MCF 10A (cell line): ENCODE measurements at regions of chr7 and their contacts with region 1.

Region 1: DNA sequence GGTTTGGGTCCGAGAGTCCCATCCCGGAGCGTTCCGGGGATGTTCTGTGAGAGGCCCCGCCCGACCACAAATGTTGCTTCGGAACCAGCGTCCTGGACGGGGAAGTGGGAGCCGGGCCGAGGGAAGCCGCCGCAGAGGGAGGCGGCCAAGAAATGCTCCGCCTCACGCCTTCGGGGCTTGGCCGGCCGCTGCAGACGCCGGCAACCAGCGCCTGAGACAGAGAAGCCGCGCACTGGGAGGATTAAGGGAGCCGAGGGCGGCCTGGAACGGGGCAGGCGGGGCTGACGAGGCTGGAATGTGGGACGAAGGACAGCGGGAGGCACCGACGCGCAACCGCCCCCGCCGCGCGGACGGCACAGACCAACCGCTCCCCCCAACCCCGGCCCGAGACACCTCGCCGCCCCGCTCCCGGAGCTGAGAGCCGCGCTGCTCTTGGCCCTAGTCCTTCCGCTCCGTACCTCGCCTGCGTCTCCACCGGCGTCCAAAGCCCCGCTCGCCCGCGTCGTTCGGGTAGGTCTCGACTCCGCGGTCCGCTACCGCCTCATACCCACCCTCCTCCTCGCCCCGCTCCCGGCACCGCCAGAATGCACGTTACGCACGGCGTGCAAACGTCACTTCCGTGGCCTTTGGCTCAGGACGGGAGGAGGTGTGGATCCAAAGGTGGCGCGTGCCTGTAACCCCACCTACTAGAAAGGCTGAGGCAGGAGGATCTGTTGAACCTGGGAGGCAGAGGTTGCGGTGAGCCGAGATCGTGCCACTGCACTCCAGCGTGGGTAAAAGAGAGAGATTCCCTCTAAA is 36.7 kb upstream of the KCTD7 start:
- DNase-seq: peak; percentile 94
- H3K4me3 Mint-ChIP-seq: peak overlapping the region; percentile 94
- H3K27ac Mint-ChIP-seq: peak overlapping the region; percentile 98
- H3K4me1 Mint-ChIP-seq: peaks cover 27% of the 10 kb centered on the region
- H3K27me3 Mint-ChIP-seq: no peaks in the 10 kb centered on the region
- CTCF ChIP-seq: no peak

Region 2: GRCh38 chr7:65037740-65038678 is 1554.0 kb before region 1 on chr7:
- CTCF ChIA-PET with region 1: no interaction called
- POLR2A ChIA-PET with region 1: no interaction called
- intact Hi-C with region 1: no loop called
- DNase-seq: peak; percentile 91
- H3K4me3 Mint-ChIP-seq: peak overlapping the region; percentile 80
- H3K27ac Mint-ChIP-seq: peak overlapping the region; percentile 61
- H3K4me1 Mint-ChIP-seq: peaks cover 7% of the 10 kb centered on the region
- H3K27me3 Mint-ChIP-seq: no peaks in the 10 kb centered on the region
- CTCF ChIP-seq: no peak

Region 3: GRCh38 chr7:65840446-65840845 is 751.6 kb before region 1 on chr7:
- CTCF ChIA-PET with region 1: no interaction called
- POLR2A ChIA-PET with region 1: no interaction called
- intact Hi-C with region 1: no loop called
- DNase-seq: no peak
- H3K4me3 Mint-ChIP-seq: no peak overlapping the region
- H3K27ac Mint-ChIP-seq: no peak overlapping the region
- H3K4me1 Mint-ChIP-seq: peaks cover 7% of the 10 kb centered on the region
- H3K27me3 Mint-ChIP-seq: no peaks in the 10 kb centered on the region
- CTCF ChIP-seq: no peak

Region 4: DNA sequence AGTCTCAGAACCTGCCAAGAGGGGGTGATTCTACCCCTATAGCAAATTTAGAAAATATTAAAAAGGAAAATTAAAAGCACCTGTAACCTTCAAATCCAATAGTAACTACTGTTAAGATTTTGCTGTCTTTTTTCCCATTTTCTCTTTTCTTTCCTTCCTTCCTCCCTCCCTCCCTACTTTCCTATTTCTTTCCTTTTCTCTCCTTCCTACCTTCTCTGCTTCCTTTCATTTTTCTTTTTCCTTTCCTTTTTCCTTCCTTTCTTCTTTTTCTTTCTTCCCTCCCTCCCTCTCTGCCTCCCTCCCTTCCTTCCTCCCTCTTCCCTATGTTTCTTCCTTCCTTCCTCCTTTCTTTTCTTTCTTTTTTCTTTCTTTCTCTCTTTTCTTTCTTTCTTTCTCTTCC is 83.6 kb before region 1 on chr7:
- CTCF ChIA-PET with region 1: no interaction called
- POLR2A ChIA-PET with region 1: no interaction called
- intact Hi-C with region 1: no loop called
- DNase-seq: no peak
- H3K4me3 Mint-ChIP-seq: no peak overlapping the region
- H3K27ac Mint-ChIP-seq: no peak overlapping the region
- H3K4me1 Mint-ChIP-seq: no peaks in the 10 kb centered on the region
- H3K27me3 Mint-ChIP-seq: peaks cover 12% of the 10 kb centered on the region
- CTCF ChIP-seq: no peak

Region 5: DNA sequence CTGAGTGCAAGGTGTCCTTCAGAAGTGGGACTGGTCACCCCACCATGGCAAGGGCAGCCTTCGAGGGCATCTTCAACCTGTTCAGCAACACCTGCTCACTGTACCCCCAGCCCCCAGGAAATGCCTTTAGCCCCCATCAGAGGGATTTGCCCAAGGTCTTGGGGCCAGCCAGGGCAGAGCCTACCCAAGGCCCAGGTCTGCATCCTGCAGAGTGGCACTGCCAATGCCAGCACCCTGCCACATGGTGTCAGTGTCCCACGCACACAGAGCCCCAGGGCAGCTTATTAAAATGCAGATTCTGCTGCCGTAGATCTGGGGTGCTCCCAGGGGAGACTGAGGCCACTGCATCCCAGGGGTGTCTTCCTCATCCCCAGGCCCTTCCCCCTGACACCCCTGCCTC is 69.5 kb before region 1 on chr7:
- CTCF ChIA-PET with region 1: no interaction called
- POLR2A ChIA-PET with region 1: no interaction called
- intact Hi-C with region 1: no loop called
- DNase-seq: no peak
- H3K4me3 Mint-ChIP-seq: no peak overlapping the region
- H3K27ac Mint-ChIP-seq: no peak overlapping the region
- H3K4me1 Mint-ChIP-seq: no peaks in the 10 kb centered on the region
- H3K27me3 Mint-ChIP-seq: no peaks in the 10 kb centered on the region
- CTCF ChIP-seq: peak; percentile 25

Region 6: GRCh38 chr7:66628361-66629140 is 36.6 kb after region 1 on chr7 and contains the start of gene KCTD7:
- CTCF ChIA-PET with region 1: no interaction called
- POLR2A ChIA-PET with region 1: interaction called, 28 read pairs
- intact Hi-C with region 1: loop called (anchors 2 kb)
- DNase-seq: peak; percentile 96
- H3K4me3 Mint-ChIP-seq: peak within 1 kb of the TSS; percentile 79
- H3K27ac Mint-ChIP-seq: peak within 1 kb of the TSS; percentile 84
- H3K4me1 Mint-ChIP-seq: peaks cover 16% of the 10 kb centered on the region
- H3K27me3 Mint-ChIP-seq: no peaks in the 10 kb centered on the region
- CTCF ChIP-seq: no peak
- total RNA-seq, gene KCTD7: 3.7 and 5.5 TPM in 2 replicates